PC-3 (cell line): ENCODE measurements at regions of chr21 and their contacts with region 1.

Region 1: GRCh38 chr21:15592271-15592860 is 137.4 kb upstream of the USP25 start:
- DNase-seq: peak; percentile 89
- ATAC-seq: peak; percentile 90
- H3K4me3 ChIP-seq: peak overlapping the region; percentile 57
- H3K27ac ChIP-seq: peak overlapping the region; percentile 96
- H3K4me1 ChIP-seq: peaks cover 25% of the 10 kb centered on the region
- H3K27me3 ChIP-seq: no peaks in the 10 kb centered on the region
- CTCF ChIP-seq: peak; percentile 91

Region 2: DNA sequence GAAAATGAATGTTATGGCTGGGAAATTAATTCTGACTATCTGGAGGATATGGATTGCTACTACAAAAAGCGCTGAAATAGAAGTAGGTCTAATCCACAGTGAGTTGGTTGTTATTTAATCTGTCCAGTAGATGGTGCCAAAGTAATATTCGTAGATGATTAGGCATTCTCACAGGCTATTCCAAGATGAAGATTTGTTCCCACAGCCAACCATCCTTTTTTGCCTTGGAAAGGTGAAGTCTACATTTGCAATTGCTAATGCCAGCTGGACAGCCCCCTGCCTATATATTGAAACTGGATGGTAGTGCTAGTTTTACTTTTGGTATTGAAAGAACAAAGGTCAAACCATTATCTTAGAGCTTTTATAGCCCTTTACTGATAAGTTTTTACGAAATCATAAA is 1332.6 kb before region 1 on chr21:
- CTCF ChIA-PET with region 1: no interaction called
- POLR2A ChIA-PET with region 1: no interaction called
- intact Hi-C with region 1: loop called (anchors 1 kb)
- DNase-seq: peak; percentile 72
- ATAC-seq: peak; percentile 82
- H3K4me3 ChIP-seq: no peak overlapping the region
- H3K27ac ChIP-seq: no peak overlapping the region
- H3K4me1 ChIP-seq: no peaks in the 10 kb centered on the region
- H3K27me3 ChIP-seq: 0 out of 2 replicates have a peak, but pooled peaks cover under 1% of the 10 kb centered on the region
- CTCF ChIP-seq: peak; percentile 75

Region 3: DNA sequence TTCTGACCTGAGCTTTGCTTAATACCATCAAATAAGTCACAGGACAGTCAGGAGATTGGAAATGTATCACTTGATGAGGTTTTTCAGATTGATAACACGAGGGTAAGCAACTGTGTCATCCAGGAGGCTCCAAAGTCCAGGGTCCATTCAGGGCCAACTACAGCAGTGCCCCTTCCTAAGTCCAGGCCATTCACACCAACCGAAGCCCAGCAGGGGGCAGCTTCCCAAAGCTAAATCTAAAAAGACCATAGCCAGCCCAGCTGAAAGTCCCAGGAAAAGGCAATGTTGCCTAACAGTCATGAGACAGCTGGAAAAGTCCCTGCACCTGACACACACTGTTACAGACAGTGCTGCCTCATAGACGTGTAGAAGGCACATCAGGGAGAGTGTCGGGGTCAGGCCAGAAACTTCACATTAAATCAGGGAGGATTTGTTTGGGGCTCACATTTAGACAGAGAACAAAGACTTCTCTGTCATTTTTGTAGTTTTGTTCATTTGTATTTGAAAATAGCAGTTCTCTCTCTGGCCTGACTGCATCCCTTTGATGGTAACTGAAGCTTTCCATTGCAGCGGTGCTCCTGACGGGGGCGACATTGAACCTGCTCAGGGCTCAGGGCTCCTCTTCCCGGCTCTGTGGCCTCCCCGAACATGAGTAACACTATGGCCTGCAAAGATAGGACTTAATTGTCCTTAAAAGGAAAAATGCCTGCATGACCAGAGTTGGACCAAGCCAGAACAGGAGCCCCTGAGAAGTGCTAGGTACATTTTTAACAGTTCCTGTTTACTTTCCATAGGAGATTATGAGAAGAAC is 728.0 kb before region 1 on chr21:
- CTCF ChIA-PET with region 1: no interaction called
- POLR2A ChIA-PET with region 1: no interaction called
- intact Hi-C with region 1: loop called (anchors 5 kb)
- DNase-seq: peak; percentile 80
- ATAC-seq: peak; percentile 75
- H3K4me3 ChIP-seq: no peak overlapping the region
- H3K27ac ChIP-seq: peak overlapping the region; percentile 41
- H3K4me1 ChIP-seq: peaks cover 28% of the 10 kb centered on the region
- H3K27me3 ChIP-seq: no peaks in the 10 kb centered on the region
- CTCF ChIP-seq: peak; percentile 82

Region 4: DNA sequence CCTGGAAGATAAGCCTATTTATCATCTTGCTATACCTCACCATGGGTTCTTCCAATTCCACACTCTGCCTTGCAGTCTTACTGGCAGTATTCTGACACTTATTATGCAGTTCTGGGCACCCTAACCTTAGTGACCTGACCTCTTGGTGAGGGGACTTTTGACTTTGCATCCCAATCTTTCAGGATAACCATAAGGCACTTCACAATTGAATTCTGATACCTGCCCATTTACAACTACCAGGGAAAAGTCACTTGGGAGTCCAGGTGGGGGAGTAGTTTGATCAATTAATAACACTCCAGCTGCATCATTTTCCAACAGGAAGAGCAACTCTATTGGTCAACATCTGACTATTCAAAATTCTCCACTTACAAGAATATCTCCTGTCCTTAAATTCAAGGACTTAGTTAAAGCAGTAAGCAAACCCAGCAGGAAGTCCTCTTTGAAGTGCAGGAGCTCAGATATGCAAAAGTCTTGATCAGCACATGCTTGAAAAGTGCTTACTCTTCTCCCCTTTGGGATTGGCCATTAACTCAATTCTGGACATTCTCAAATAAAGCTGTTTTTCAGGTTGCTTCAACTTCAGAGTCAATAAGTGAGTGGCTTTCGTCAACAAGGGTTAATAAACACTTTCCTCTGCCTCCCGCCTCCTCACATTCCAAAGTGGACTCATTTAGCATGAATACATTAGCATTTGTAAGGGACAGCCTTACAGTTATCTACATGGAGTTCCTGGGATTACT is 350.2 kb before region 1 on chr21:
- CTCF ChIA-PET with region 1: no interaction called
- POLR2A ChIA-PET with region 1: no interaction called
- intact Hi-C with region 1: loop called (anchors 10 kb)
- DNase-seq: peak; percentile 60
- ATAC-seq: peak; percentile 32
- H3K4me3 ChIP-seq: no peak overlapping the region
- H3K27ac ChIP-seq: peak overlapping the region; percentile 47; the same call in 1 of the 2 replicates
- H3K4me1 ChIP-seq: peaks cover 28% of the 10 kb centered on the region
- H3K27me3 ChIP-seq: no peaks in the 10 kb centered on the region
- CTCF ChIP-seq: peak; percentile 55; the same call in 1 of the 2 replicates

Region 5: DNA sequence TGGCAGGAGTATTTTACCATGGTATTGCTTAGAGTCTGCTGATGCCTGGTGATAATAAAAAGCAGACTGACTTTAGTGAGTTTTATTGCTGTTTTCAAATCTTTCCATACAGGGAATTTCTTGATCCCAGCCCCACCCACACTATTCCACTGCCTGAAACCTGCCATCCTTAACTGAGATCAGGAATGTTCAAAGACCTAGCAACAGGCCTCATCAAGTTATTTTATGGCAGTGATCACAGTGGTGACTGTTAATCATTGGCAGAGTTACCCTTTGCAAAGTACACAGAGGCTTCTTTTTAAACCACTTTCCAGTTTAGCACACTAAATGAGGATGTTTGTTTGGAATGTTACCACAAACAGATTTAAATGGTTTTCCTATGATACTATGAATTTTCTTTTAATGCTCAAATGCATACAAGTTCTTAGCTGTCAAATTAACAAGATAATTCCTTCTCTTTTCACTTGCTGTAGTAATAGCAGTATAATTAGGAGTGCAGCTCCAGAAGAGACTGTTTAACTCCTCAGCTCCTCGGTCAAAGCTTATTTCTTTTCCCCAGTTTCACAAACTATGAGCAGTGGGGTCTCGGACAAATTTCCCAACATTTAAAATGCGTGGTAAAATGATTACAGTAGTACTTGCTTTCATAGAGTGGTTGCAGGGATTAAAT is 67.5 kb after region 1 on chr21:
- CTCF ChIA-PET with region 1: no interaction called
- POLR2A ChIA-PET with region 1: no interaction called
- intact Hi-C with region 1: loop called (anchors 2 kb)
- DNase-seq: peak; percentile 59
- ATAC-seq: peak; percentile 98
- H3K4me3 ChIP-seq: no peak overlapping the region
- H3K27ac ChIP-seq: no peak overlapping the region
- H3K4me1 ChIP-seq: peaks cover 11% of the 10 kb centered on the region
- H3K27me3 ChIP-seq: no peaks in the 10 kb centered on the region
- CTCF ChIP-seq: no peak

Region 6: DNA sequence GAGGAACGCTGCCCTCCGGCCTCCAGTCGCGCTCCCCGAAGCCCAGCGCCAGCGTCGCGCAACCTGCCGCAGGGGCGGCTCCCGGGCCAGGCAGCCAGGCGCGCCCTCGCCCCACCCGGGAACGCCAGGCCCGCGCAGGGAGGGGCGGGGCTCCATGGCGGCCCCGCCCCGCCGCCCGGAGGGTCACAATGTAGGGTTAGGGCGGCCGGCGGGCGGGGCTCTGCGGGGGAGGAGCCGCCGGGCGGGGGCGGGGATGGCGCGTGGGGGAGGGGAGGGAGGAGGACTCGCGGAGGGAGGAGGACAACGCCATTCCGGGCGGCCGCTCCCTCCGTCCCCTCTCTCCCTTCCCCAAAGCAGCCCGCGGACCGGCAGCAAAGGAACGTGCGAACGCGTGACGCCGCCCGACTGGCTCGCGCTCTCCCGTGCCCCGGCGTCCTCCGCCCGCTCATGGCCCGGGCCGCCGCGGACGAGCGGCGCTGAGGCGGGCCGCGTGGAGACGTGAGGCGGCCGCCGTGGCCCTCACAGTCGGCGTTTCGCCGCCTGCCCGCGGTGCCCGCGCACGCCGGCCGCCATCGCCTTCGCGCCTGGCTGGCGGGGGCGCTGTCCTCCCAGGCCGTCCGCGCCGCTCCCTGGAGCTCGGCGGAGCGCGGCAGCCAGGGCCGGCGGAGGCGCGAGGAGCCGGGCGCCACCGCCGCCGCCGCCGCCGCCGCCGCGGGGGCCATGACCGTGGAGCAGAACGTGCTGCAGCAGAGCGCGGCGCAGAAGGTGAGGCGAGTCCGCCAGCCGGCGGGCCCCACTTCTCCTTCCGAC is 137.5 kb after region 1 on chr21 and contains the start of gene USP25:
- CTCF ChIA-PET with region 1: interaction called, 3 read pairs
- POLR2A ChIA-PET with region 1: no interaction called
- intact Hi-C with region 1: loop called (anchors 1 kb)
- DNase-seq: peak; percentile 94
- ATAC-seq: peak; percentile 77
- H3K4me3 ChIP-seq: peak within 1 kb of the TSS; percentile 85
- H3K27ac ChIP-seq: peak within 1 kb of the TSS; percentile 58
- H3K4me1 ChIP-seq: peaks cover 17% of the 10 kb centered on the region
- H3K27me3 ChIP-seq: no peaks in the 10 kb centered on the region
- CTCF ChIP-seq: no peak
- total RNA-seq, gene USP25: 28.3 and 54.4 TPM in 2 replicates